ENCODE measurements at regions of chr2 and their contacts with region 1.

Region 1: GRCh38 chr2:54558188-54559005 is 102.3 kb downstream of the SPTBN1 start:
- DNase-seq: peak; percentile 48 to 75 (median 64)
- ATAC-seq: peak; percentile 82
- H3K4me3 ChIP-seq: peak overlapping the region; percentile 94
- H3K4me3 Mint-ChIP-seq: peak overlapping the region; percentile 86 to 100 (median 98)
- H3K27ac ChIP-seq: peak overlapping the region; percentile 86
- H3K27ac Mint-ChIP-seq: peak overlapping the region; percentile 90 to 98 (median 96)
- H3K4me1 ChIP-seq: peaks cover 10 to 11% of the 10 kb centered on the region in 2 donors
- H3K4me1 Mint-ChIP-seq: peaks cover 29 to 65% (median 59%) of the 10 kb centered on the region in 7 donors
- H3K27me3 ChIP-seq: no peaks in the 10 kb centered on the region
- H3K27me3 Mint-ChIP-seq: no peaks in the 10 kb centered on the region

Region 2: GRCh38 chr2:54579684-54580620 is 21.6 kb after region 1 on chr2:
- CTCF ChIA-PET with region 1: interaction called, 23 read pairs
- POLR2A ChIA-PET with region 1: interaction called, 276 read pairs
- intact Hi-C with region 1: loop called in 1 of 2 experiments (anchors 1 kb)
- DNase-seq: peak in 7 of 9 donors; percentile 56 to 83 (median 78)
- ATAC-seq: peak; percentile 88
- H3K4me3 ChIP-seq: peak overlapping the region; percentile 20
- H3K4me3 Mint-ChIP-seq: peak overlapping the region; percentile 70 to 93 (median 76)
- H3K27ac ChIP-seq: peak overlapping the region; percentile 95
- H3K27ac Mint-ChIP-seq: peak overlapping the region; percentile 85 to 98 (median 96)
- H3K4me1 ChIP-seq: peaks cover 82 to 92% of the 10 kb centered on the region in 2 donors
- H3K4me1 Mint-ChIP-seq: peaks cover 74 to 99% (median 95%) of the 10 kb centered on the region in 7 donors
- H3K27me3 ChIP-seq: no peaks in the 10 kb centered on the region
- H3K27me3 Mint-ChIP-seq: no peaks in the 10 kb centered on the region

Region 3: GRCh38 chr2:54597153-54597848 is 38.9 kb after region 1 on chr2:
- CTCF ChIA-PET with region 1: interaction called, 28 read pairs
- POLR2A ChIA-PET with region 1: interaction called, 154 read pairs
- intact Hi-C with region 1: loop called (anchors 1 to 2 kb)
- DNase-seq: no peak
- ATAC-seq: peak; percentile 39
- H3K4me3 ChIP-seq: peak overlapping the region; percentile 16
- H3K4me3 Mint-ChIP-seq: peak overlapping the region; percentile 79 to 93 (median 86)
- H3K27ac ChIP-seq: peak overlapping the region; percentile 79
- H3K27ac Mint-ChIP-seq: peak overlapping the region; percentile 86 to 98 (median 97)
- H3K4me1 ChIP-seq: peaks cover 41 to 90% of the 10 kb centered on the region in 2 donors
- H3K4me1 Mint-ChIP-seq: peaks cover 59 to 100% (median 97%) of the 10 kb centered on the region in 7 donors
- H3K27me3 ChIP-seq: no peaks in the 10 kb centered on the region
- H3K27me3 Mint-ChIP-seq: no peaks in the 10 kb centered on the region

Region 4: GRCh38 chr2:54618646-54619565 is 60.5 kb after region 1 on chr2:
- CTCF ChIA-PET with region 1: interaction called, 4 read pairs
- POLR2A ChIA-PET with region 1: interaction called, 12 read pairs
- intact Hi-C with region 1: loop called in 1 of 2 experiments (anchors 1 kb)
- DNase-seq: peak in 1 of 9 donors; percentile 32
- ATAC-seq: no peak
- H3K4me3 ChIP-seq: no peak overlapping the region
- H3K4me3 Mint-ChIP-seq: peak overlapping the region in 8 of 10 donors; percentile 8 to 76 (median 47)
- H3K27ac ChIP-seq: peak overlapping the region; percentile 25
- H3K27ac Mint-ChIP-seq: peak overlapping the region; percentile 25 to 88 (median 79)
- H3K4me1 ChIP-seq: peaks cover 0 to 11% of the 10 kb centered on the region in 2 donors
- H3K4me1 Mint-ChIP-seq: peaks cover 19 to 65% (median 45%) of the 10 kb centered on the region in 7 donors
- H3K27me3 ChIP-seq: no peaks in the 10 kb centered on the region
- H3K27me3 Mint-ChIP-seq: no peaks in the 10 kb centered on the region